ENCODE measurements at regions of chr20 and their contacts with region 1.

Region 1: GRCh38 chr20:31560094-31560899 is 44.8 kb upstream of the ID1 start:
- DNase-seq: peak; percentile 69
- ATAC-seq: peak; percentile 39
- H3K4me3 ChIP-seq: peak overlapping the region; percentile 24
- H3K27ac ChIP-seq: peak overlapping the region; percentile 95
- H3K4me1 ChIP-seq: peaks cover 40% of the 10 kb centered on the region
- H3K27me3 ChIP-seq: no peaks in the 10 kb centered on the region
- CTCF ChIP-seq: peak; percentile 97

Region 2: DNA sequence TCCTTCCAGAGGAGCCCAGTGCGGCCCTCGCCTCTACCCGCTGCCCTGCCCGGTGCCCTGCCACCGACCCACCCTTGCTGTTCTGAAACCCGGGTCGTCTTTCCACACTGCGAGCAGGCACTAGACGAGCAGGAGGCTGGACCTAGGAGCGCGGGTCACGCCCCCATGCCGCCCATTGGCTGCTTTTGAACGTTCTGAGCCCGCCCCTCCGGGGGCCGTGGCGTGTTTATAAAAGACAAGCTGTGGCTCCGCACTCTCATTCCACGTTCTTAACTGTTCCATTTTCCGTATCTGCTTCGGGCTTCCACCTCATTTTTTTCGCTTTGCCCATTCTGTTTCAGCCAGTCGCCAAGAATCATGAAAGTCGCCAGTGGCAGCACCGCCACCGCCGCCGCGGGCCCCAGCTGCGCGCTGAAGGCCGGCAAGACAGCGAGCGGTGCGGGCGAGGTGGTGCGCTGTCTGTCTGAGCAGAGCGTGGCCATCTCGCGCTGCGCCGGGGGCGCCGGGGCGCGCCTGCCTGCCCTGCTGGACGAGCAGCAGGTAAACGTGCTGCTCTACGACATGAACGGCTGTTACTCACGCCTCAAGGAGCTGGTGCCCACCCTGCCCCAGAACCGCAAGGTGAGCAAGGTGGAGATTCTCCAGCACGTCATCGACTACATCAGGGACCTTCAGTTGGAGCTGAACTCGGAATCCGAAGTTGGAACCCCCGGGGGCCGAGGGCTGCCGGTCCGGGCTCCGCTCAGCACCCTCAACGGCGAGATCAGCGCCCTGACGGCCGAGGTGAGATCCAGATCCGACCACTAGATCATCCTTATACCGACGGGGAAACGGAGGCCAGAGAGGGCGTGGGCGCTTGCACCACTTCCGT is 45.0 kb after region 1 on chr20 and contains the start of gene ID1:
- CTCF ChIA-PET with region 1: interaction called, 118 read pairs
- POLR2A ChIA-PET with region 1: interaction called, 7 read pairs
- intact Hi-C with region 1: no loop called
- DNase-seq: peak; percentile 97
- ATAC-seq: peak; percentile 49
- H3K4me3 ChIP-seq: peak within 1 kb of the TSS; percentile 97
- H3K27ac ChIP-seq: peak within 1 kb of the TSS; percentile 69
- H3K4me1 ChIP-seq: peaks cover 57% of the 10 kb centered on the region
- H3K27me3 ChIP-seq: no peaks in the 10 kb centered on the region
- CTCF ChIP-seq: no peak
- total RNA-seq, gene ID1: 774 and 872 TPM in 2 replicates

Region 3: DNA sequence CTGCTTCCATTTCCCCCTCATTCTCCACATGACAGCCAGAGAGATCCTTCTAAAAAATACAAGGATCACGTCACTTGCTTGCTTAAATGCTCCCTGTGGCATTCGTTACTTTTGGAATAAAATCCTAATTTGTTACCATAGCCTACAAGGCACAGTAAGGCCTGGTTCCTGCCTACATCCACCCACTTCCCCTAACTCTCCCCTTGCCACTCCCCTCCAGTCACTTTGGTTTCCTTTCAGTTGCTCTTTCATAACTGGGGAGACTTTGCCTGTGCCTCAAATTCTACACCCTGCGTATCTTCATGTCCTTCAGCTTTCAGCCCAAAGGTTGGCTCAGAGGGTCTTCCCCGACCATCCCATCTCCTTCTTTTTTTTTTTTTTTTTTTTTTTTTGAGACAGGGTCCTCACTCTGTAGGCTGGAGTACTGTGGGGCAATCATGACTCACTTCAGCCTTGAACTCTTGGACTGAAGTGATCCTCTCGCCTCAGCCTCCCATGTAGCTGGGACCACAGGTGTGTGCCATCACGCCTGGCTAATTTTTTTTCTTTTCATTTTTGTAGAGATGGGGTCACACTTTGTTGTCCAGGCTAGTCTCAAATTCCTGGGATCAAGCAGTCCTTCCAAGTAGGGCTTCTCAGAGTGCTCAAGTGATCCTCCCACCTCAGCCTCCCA is 57.3 kb after region 1 on chr20:
- CTCF ChIA-PET with region 1: interaction called, 118 read pairs
- POLR2A ChIA-PET with region 1: interaction called, 17 read pairs
- intact Hi-C with region 1: loop called (anchors 1 kb)
- DNase-seq: no peak
- ATAC-seq: no peak
- H3K4me3 ChIP-seq: no peak overlapping the region
- H3K27ac ChIP-seq: no peak overlapping the region
- H3K4me1 ChIP-seq: peaks cover 2% of the 10 kb centered on the region; the same call in 1 of the 2 replicates
- H3K27me3 ChIP-seq: no peaks in the 10 kb centered on the region
- CTCF ChIP-seq: no peak

Measured in PC-3 (cell line).